Heart right ventricle (tissue), 16 donors: ENCODE measurements at regions of chr3 and their contacts with region 1.

Region 1: GRCh38 chr3:141105828-141106628 is 54.9 kb downstream of the SPSB4 start:
- DNase-seq: peak in 1 of 2 donors; percentile 82
- ATAC-seq: peak in 5 of 8 donors; percentile 12 to 52 (median 26)
- H3K4me3 ChIP-seq: no peak overlapping the region
- H3K27ac ChIP-seq: no peak overlapping the region
- H3K4me1 ChIP-seq: peaks cover 0 to 31% (median 11%) of the 10 kb centered on the region in 9 donors
- H3K27me3 ChIP-seq: no peaks in the 10 kb centered on the region
- CTCF ChIP-seq: peak; percentile 50 to 84 (median 81)

Region 2: DNA sequence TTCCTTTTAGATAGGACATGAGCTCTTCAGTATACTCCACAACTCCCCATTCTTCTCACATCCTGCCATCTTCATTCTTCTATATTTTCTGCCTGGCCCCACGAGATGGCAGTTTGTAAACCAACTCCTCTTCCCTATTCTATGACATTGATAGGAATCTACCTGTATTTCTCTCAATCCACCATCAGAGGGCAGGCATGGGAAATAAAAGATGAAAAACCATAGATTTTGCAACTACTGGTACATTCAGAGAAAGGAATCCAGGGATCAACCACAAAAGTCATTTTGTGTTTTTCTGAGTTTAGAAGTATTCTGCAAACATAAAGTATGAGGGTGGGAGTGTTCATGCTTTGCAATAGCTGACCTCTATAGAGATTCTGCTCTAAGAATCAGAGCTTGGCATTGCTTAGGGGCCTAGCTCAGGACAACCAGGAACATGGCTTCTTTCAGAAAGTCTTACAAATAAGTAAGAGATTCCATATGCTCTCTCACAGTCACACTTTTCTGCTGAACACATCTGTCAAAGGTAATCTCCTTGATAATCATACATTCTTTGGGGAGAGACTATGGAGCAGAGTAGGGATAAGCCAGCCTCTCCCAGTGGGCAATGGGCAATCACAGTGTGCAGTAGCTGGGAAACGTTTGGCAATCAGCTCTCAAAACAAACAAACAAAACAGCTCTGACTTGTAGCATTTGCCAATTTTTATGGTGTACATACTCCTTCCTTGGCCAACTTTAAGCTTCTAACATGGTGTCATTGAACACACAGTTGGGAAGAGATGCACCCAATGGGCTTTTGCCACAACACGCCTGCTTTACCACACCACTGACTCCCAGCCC is 207.5 kb before region 1 on chr3:
- intact Hi-C with region 1: loop called in 4 of 10 experiments (anchors 5 to 10 kb)
- DNase-seq: no peak
- ATAC-seq: peak in 4 of 8 donors; percentile 23 to 65 (median 44)
- H3K4me3 ChIP-seq: no peak overlapping the region
- H3K27ac ChIP-seq: no peak overlapping the region
- H3K4me1 ChIP-seq: peaks cover 0 to 3% (median 0%) of the 10 kb centered on the region in 9 donors
- H3K27me3 ChIP-seq: peaks cover 0 to 8% (median 0%) of the 10 kb centered on the region in 7 donors
- CTCF ChIP-seq: peak; percentile 17 to 68 (median 55)

Region 3: DNA sequence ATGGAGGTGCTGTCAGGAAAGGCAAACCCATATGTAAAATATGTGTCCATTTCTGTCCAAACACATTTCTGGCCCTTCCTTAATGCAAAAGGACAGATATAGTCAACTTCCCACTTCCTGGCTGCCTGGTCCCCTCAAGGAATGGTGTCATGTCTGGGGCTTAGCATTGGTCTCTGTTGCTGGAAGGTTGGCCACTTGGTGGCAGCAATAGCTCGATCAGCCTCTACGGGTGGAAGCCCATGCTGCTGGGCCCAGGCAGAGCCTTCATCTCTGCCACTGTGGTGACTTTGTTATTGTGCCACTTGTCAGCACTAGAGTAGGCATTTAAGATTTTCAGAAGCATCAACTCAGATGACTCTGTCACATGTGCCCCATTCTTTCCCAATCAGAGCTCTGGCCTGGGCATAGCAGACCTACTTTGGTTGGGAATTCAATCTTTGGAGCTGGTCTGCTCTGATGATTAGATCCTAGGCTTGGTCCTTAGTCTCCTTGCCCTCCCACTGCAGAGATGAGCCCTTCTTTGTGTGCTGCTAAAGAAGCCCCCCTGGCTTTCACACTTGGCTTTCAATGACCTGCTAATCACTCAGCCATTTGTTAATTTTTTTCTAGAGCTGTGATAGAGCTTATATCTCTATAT is 105.9 kb before region 1 on chr3:
- intact Hi-C with region 1: loop called in 2 of 10 experiments (anchors 2 to 5 kb)
- DNase-seq: peak; percentile 62 to 63
- ATAC-seq: peak; percentile 91 to 97 (median 94)
- H3K4me3 ChIP-seq: no peak overlapping the region
- H3K27ac ChIP-seq: no peak overlapping the region
- H3K4me1 ChIP-seq: no peaks in the 10 kb centered on the region
- H3K27me3 ChIP-seq: no peaks in the 10 kb centered on the region
- CTCF ChIP-seq: peak; percentile 47 to 85 (median 77)

Region 4: DNA sequence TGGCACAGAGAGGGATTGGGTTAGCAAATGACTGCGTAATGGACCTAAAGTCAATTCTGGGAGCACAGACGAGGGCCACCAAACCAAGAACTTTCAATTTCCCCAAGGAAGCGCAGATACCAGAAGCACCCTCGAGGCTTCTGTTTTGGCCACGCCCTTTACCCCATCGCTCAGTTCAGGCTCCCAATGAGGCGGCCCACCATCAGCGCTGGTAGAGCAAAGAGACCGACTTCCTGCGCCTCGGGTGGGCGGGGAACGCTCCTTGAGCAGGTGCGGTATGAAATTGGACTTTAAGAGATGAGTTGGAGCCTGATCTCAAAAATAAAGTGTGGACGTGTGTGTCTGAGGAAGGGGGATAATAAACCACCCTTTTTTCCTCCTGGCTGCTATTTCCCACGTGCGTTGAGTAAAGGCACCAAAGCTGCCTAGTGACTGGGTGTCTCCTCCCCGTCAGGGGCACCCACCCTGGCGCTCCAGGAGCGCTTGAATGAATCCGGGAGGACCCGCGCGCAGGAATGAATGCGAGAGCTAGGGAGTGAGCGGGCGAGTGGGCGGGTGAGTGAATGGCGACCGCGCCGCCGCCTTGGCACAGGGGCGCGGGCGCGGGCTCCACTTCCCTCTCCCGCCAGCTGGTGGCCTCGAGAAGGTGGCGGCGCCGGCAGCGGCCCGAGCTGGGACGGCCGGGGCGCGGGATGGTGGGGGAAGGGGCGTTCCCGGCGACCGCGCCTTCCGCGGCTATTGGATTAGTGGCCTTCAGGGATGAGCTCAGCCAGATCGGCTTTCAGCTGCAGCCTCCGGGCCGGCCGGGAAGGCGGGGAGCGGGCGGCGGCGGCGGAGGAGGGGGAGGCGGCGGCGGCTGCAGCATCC is 55.2 kb before region 1 on chr3 and contains the start of gene SPSB4:
- intact Hi-C with region 1: loop called in 8 of 10 experiments (anchors 2 to 5 kb)
- DNase-seq: peak; percentile 76 to 77
- ATAC-seq: peak; percentile 77 to 91 (median 90)
- H3K4me3 ChIP-seq: peak within 1 kb of the TSS; percentile 25 to 70 (median 58)
- H3K27ac ChIP-seq: peak within 1 kb of the TSS in 9 of 10 donors; percentile 26 to 84 (median 77)
- H3K4me1 ChIP-seq: peaks cover 0 to 24% (median 20%) of the 10 kb centered on the region in 9 donors
- H3K27me3 ChIP-seq: peaks cover 0 to 73% (median 25%) of the 10 kb centered on the region in 7 donors
- CTCF ChIP-seq: peak; percentile 20 to 67 (median 52)
- total RNA-seq, gene SPSB4: 2.1 to 8.7 (median 4.7) TPM

Region 5: DNA sequence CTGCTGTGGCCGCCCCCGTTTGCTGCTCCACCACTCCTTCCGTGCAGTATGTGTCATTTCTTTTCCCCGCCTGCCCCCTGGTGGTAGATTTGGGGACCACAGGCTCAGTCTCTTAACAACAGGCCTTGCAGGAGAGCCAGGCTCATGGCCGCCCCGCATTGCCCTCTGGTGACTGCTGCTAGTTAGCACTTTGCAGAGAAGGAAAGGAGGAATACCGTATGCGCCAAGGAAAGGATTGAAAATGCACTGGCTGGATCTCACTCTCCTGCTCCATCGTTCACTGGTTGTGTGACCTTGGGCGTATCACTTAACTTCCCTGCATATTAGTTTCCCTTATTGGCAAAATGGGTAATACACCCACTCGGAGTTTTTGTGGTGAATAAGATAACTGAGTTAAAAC is 86.3 kb after region 1 on chr3:
- intact Hi-C with region 1: loop called in 7 of 10 experiments (anchors 5 kb)
- DNase-seq: peak; percentile 96
- ATAC-seq: peak; percentile 98 to 99 (median 99)
- H3K4me3 ChIP-seq: no peak overlapping the region
- H3K27ac ChIP-seq: no peak overlapping the region
- H3K4me1 ChIP-seq: peaks cover 0 to 4% (median 0%) of the 10 kb centered on the region in 9 donors
- H3K27me3 ChIP-seq: peaks cover 0 to 17% (median 6%) of the 10 kb centered on the region in 7 donors
- CTCF ChIP-seq: peak; percentile 96 to 99 (median 99)

Region 6: DNA sequence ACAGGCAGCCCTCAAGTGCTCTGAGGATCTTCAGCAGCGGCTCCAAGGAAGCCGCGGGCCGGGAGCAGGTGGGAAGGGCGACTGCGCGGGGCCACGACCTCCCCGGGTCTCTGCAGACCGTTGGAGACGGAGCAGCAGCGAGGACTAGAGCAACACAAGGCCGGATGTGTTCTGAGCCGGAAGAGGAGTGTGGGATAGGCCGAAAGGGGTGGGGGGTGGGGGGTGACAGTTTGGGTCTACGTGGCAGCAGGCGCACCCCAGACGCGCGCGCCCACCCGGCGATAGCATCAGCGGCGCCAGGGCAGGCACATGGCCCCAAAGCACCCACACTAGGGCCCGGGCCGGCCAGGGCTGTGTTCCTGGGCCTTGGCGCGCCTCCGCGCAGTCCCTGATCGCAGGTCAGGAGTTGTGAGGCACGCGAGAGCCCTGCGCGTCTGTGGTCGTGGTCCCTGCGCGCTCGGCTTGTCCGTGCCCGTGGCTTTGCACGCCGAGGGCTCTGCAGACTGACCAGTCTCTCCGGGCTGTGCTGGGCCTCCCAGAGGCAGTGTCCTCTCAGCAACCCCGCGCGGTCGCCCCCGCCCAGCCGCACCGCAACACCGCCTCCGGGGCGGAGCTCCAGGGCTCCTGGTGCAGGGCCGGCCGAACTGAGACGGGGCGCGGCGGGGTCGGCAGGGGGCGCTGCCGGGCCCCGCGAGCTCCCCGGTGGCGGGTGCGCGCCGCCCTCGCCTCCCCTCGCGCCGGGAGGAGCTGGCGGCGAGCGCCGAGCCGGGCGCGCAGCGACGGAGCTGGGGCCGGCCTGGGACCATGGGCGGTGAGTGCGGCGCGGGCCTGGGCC is 125.3 kb after region 1 on chr3 and contains the start of gene PXYLP1:
- intact Hi-C with region 1: no loop called
- DNase-seq: peak; percentile 93 to 96
- ATAC-seq: peak; percentile 94 to 98 (median 96)
- H3K4me3 ChIP-seq: peak within 1 kb of the TSS; percentile 83 to 97 (median 88)
- H3K27ac ChIP-seq: peak within 1 kb of the TSS; percentile 56 to 95 (median 92)
- H3K4me1 ChIP-seq: peaks cover 2 to 34% (median 20%) of the 10 kb centered on the region in 9 donors
- H3K27me3 ChIP-seq: no peaks in the 10 kb centered on the region
- CTCF ChIP-seq: peak; percentile 56 to 92 (median 75)
- total RNA-seq, gene PXYLP1: 8.7 to 33.5 (median 19.9) TPM